Colonic mucosa (tissue), 4 donors: ENCODE measurements at regions of chr9 and their contacts with region 1.

Region 1: GRCh38 chr9:110623462-110624025 is 44.0 kb upstream of the SVEP1 start:
- DNase-seq: peak; percentile 56
- H3K4me3 ChIP-seq: no peak overlapping the region
- H3K27ac ChIP-seq: no peak overlapping the region
- H3K4me1 ChIP-seq: no peaks in the 10 kb centered on the region
- H3K27me3 ChIP-seq: no peaks in the 10 kb centered on the region
- CTCF ChIP-seq: peak; percentile 45

Region 2: GRCh38 chr9:110370316-110370715 is 253.2 kb before region 1 on chr9:
- intact Hi-C with region 1: no loop called
- DNase-seq: no peak
- H3K4me3 ChIP-seq: no peak overlapping the region
- H3K27ac ChIP-seq: no peak overlapping the region
- H3K4me1 ChIP-seq: no peaks in the 10 kb centered on the region
- H3K27me3 ChIP-seq: no peaks in the 10 kb centered on the region
- CTCF ChIP-seq: no peak

Region 3: DNA sequence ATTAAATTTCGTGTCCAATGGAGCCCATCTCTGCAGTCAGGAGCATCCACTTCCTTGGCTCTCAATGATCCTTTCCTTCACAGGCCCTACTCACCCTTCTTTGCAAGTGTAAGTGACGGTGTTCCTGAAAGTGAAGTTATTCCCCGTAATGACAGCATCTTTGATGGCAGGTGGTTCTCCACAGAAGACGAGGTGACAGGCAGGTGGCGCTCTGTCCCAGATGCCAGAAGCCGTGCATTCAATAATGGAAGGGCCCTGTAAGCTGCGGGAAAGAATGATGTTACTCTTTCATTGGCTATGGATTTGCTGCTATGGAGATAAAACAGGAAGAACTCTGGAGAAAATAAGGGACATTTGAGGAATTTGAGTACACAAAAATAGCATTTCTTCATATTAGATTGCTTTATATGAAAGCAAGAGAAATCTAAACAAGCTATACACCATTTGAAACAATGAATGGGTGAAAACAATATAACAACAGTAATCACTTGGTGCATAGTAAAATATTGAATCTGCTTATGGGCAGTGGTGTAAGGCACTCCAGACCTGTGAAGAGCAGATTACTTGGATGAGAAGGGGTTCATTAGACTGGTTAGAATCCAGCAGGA is 195.9 kb before region 1 on chr9:
- intact Hi-C with region 1: loop called (anchors 5 kb)
- DNase-seq: peak; percentile 65
- H3K4me3 ChIP-seq: no peak overlapping the region
- H3K27ac ChIP-seq: no peak overlapping the region
- H3K4me1 ChIP-seq: no peaks in the 10 kb centered on the region
- H3K27me3 ChIP-seq: no peaks in the 10 kb centered on the region
- CTCF ChIP-seq: peak; percentile 54

Region 4: GRCh38 chr9:110452227-110452801 is 171.2 kb before region 1 on chr9:
- intact Hi-C with region 1: loop called (anchors 5 kb)
- DNase-seq: no peak
- H3K4me3 ChIP-seq: no peak overlapping the region
- H3K27ac ChIP-seq: no peak overlapping the region
- H3K4me1 ChIP-seq: no peaks in the 10 kb centered on the region
- H3K27me3 ChIP-seq: no peaks in the 10 kb centered on the region
- CTCF ChIP-seq: peak; percentile 29